ENCODE measurements at regions of chr17 and their contacts with region 1.

Region 1: DNA sequence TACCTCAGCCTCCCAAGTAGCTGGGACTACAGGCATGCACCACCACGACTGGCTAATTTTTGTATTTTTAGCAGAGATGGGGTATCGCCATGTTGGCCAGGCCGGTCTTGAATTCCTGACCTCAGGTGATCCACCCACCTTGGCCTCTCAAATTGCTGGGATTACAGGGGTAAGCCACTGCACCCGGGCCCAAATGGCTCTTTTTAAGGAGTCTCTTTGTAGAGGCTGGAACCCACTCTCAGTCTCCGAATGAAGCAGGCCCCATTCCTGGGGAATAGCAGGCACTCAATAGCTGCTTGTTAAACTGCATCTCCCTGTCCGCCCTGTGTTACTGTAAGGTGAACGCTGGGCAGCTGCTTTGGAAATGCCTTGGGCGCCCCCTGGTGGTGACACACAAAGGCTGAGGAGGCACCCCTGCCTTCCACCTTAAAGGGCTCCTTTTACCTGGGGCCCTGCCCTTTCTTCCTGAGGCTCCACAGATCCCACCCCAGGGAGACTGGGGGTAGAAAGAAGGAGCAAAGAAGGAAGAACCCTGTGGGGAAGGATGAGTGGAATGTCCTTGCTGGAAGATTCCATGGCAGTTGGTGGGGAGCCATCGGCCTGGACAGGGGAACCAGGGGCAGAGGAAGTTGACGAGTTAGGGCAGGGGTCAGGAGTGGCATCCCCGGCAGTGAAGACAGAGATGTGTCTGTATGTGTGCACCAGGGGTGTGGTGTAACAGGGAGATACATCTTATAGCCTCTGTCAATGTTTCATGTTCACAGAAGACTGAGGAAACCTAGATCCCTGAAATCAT is 6.1 kb upstream of the SP2 start:
- DNase-seq: peak; percentile 89
- H3K4me3 ChIP-seq: no peak overlapping the region
- H3K27ac ChIP-seq: no peak overlapping the region
- H3K4me1 ChIP-seq: peaks cover 5% of the 10 kb centered on the region; the same call in 1 of the 2 replicates
- H3K27me3 ChIP-seq: no peaks in the 10 kb centered on the region

Region 2: GRCh38 chr17:47840740-47841603 is 49.0 kb before region 1 on chr17 and contains the start of gene SCRN2:
- in situ Hi-C with region 1: loop called (anchors 5 kb)
- DNase-seq: peak; percentile 88
- H3K4me3 ChIP-seq: peak within 1 kb of the TSS; percentile 92
- H3K27ac ChIP-seq: no peak within 1 kb of the TSS
- H3K4me1 ChIP-seq: peaks cover 16% of the 10 kb centered on the region
- H3K27me3 ChIP-seq: no peaks in the 10 kb centered on the region
- total RNA-seq, gene SCRN2: 36.3 and 41.2 TPM in 2 replicates

Measured in GM23248 (cell line).